GM12878 (cell line): ENCODE measurements at regions of chr10 and their contacts with region 1.

Region 1: GRCh38 chr10:89810908-89811515 is 109.6 kb downstream of the KIF20B start:
- DNase-seq: no peak
- ATAC-seq: no peak
- H3K4me3 ChIP-seq: no peak overlapping the region
- H3K27ac ChIP-seq: no peak overlapping the region
- H3K4me1 ChIP-seq: peaks cover 5% of the 10 kb centered on the region
- H3K27me3 ChIP-seq: no peaks in the 10 kb centered on the region
- CTCF ChIP-seq: no peak
- EP300 ChIP-seq: no peak
- POLR2A ChIP-seq: no peak
- RAD21 ChIP-seq: no peak

Region 2: GRCh38 chr10:89668386-89669071 is 142.5 kb before region 1 on chr10:
- CTCF ChIA-PET with region 1: no interaction called
- POLR2A ChIA-PET with region 1: no interaction called
- RAD21 ChIA-PET with region 1: no interaction called
- SMC1A ChIA-PET with region 1: no interaction called
- in situ Hi-C with region 1: no loop called
- intact Hi-C with region 1: no loop called
- DNase-seq: no peak
- ATAC-seq: no peak
- H3K4me3 ChIP-seq: no peak overlapping the region
- H3K27ac ChIP-seq: no peak overlapping the region
- H3K4me1 ChIP-seq: no peaks in the 10 kb centered on the region
- H3K27me3 ChIP-seq: no peaks in the 10 kb centered on the region
- CTCF ChIP-seq: no peak
- EP300 ChIP-seq: no peak
- POLR2A ChIP-seq: no peak
- RAD21 ChIP-seq: no peak

Region 3: DNA sequence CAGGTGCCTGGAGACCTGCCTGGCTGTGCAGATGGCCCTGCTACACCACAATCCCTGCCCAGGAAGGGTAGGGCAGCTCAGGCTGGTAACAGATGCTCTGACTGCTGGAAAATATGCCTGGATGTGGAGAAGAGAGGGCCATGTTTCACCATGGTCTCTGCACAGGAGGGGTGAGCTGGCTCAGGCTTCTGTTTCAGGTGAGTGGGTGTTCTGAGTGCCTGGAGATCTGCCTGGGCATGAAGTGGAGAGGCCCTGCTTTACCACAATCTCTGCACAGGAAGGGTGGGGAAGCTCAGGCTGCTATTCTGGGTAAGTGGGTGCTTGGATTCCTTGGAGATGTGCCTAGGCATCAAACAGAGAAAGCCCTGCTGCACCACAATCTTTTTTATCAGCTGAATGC is 240.5 kb after region 1 on chr10:
- CTCF ChIA-PET with region 1: no interaction called
- POLR2A ChIA-PET with region 1: no interaction called
- RAD21 ChIA-PET with region 1: no interaction called
- SMC1A ChIA-PET with region 1: no interaction called
- in situ Hi-C with region 1: no loop called
- intact Hi-C with region 1: no loop called
- DNase-seq: peak; percentile 49
- ATAC-seq: peak; percentile 66
- H3K4me3 ChIP-seq: no peak overlapping the region
- H3K27ac ChIP-seq: peak overlapping the region; percentile 35
- H3K4me1 ChIP-seq: peaks cover 22% of the 10 kb centered on the region
- H3K27me3 ChIP-seq: no peaks in the 10 kb centered on the region
- CTCF ChIP-seq: no peak
- EP300 ChIP-seq: no peak
- POLR2A ChIP-seq: no peak
- RAD21 ChIP-seq: no peak

Region 4: DNA sequence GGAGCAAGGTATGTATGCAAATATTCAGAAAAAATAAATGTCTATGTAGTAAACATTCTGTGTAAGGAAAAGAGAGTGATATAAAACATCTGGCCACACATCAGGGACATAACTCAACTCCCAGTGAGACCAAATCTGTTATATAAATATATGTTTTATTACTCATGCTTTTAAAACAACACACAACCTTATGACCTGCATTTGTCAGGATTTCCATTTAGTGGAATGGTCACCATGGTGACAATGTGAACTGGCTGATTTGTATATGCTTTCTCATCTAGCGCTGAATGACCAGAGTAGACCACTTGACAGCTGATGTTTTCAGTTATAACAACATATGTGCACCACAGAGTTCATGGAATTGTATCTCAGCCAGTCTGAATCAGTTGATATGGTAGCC is 495.2 kb after region 1 on chr10:
- CTCF ChIA-PET with region 1: no interaction called
- POLR2A ChIA-PET with region 1: no interaction called
- RAD21 ChIA-PET with region 1: no interaction called
- SMC1A ChIA-PET with region 1: no interaction called
- in situ Hi-C with region 1: no loop called
- intact Hi-C with region 1: loop called (anchors 10 kb)
- DNase-seq: no peak
- ATAC-seq: no peak
- H3K4me3 ChIP-seq: no peak overlapping the region
- H3K27ac ChIP-seq: no peak overlapping the region
- H3K4me1 ChIP-seq: no peaks in the 10 kb centered on the region
- H3K27me3 ChIP-seq: no peaks in the 10 kb centered on the region
- CTCF ChIP-seq: no peak
- EP300 ChIP-seq: no peak
- POLR2A ChIP-seq: no peak
- RAD21 ChIP-seq: no peak